Psoas muscle (tissue), 8 donors: ENCODE measurements at regions of chr18 and their contacts with region 1.

Region 1: GRCh38 chr18:72940986-72941385 is 73.2 kb upstream of the NETO1 start:
- DNase-seq: no peak
- ATAC-seq: no peak
- H3K4me3 ChIP-seq: no peak overlapping the region
- H3K27ac ChIP-seq: no peak overlapping the region
- H3K4me1 ChIP-seq: no peaks in the 10 kb centered on the region
- H3K27me3 ChIP-seq: no peaks in the 10 kb centered on the region
- CTCF ChIP-seq: no peak

Region 2: GRCh38 chr18:72878143-72878542 is 62.8 kb before region 1 on chr18:
- intact Hi-C with region 1: loop called in 1 of 2 experiments (anchors 10 kb)
- DNase-seq: no peak
- ATAC-seq: no peak
- H3K4me3 ChIP-seq: no peak overlapping the region
- H3K27ac ChIP-seq: no peak overlapping the region
- H3K4me1 ChIP-seq: no peaks in the 10 kb centered on the region
- H3K27me3 ChIP-seq: peaks cover 0 to 3% (median 0%) of the 10 kb centered on the region in 3 donors
- CTCF ChIP-seq: no peak

Region 3: GRCh38 chr18:73009691-73010090 is 68.7 kb after region 1 on chr18:
- intact Hi-C with region 1: no loop called
- DNase-seq: no peak
- ATAC-seq: no peak
- H3K4me3 ChIP-seq: no peak overlapping the region
- H3K27ac ChIP-seq: no peak overlapping the region
- H3K4me1 ChIP-seq: no peaks in the 10 kb centered on the region
- H3K27me3 ChIP-seq: no peaks in the 10 kb centered on the region
- CTCF ChIP-seq: no peak

Region 4: DNA sequence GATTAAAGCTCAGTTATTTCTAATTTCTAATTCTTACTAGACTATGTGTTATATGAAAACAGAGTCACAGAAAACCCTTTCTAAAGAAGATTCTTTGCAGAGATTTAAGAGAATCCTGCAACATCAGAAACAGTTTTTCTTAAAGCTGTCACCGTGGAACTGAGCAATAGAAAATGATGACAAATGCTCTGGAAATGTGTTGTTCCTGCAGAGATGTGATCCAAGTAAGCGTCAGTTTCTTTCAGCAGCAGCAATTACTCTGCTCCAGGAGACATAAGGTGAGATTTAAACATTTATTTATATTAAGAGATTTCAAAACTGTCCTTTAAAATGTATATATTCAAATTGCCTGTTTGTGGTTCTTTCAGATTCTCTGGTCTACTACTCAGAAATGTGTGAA is 277.3 kb after region 1 on chr18:
- intact Hi-C with region 1: no loop called
- DNase-seq: no peak
- ATAC-seq: no peak
- H3K4me3 ChIP-seq: no peak overlapping the region
- H3K27ac ChIP-seq: no peak overlapping the region
- H3K4me1 ChIP-seq: no peaks in the 10 kb centered on the region
- H3K27me3 ChIP-seq: no peaks in the 10 kb centered on the region
- CTCF ChIP-seq: no peak

Region 5: DNA sequence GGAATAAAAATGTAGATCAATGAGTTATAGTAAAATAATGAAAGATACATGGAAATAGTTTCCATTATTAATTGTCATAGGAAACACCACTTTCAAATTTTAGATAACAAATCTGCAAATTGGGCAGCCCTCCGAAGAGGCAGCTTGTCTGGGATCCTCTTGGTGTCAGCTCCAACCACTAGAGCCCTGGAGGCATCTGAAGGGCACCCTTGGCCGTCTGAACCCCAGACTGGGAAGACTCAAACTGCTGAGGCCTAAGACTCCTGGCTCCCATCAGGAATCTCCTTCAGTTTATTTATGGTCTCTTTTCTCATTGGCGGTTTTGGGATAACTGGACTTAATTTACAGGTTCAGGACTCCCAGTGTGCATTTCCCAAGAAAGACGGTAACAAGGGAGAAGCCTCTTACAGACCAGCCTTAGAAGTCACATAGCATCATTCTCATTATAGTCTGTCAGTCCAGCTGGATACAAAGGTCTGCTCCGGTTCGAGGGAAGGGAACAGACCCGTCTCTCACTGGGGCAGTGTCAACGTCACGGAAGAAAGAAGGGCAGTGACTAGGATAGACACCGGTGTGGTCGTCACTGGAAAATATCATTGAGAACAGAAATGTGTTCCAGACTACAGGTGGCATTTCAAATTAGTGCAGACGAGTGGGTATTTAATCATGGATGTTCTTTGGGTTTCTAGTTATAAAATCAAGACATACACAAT is 317.5 kb after region 1 on chr18:
- intact Hi-C with region 1: no loop called
- DNase-seq: no peak
- ATAC-seq: no peak
- H3K4me3 ChIP-seq: no peak overlapping the region
- H3K27ac ChIP-seq: no peak overlapping the region
- H3K4me1 ChIP-seq: no peaks in the 10 kb centered on the region
- H3K27me3 ChIP-seq: no peaks in the 10 kb centered on the region
- CTCF ChIP-seq: no peak